ENCODE measurements at regions of chr16 and their contacts with region 1.

Region 1: GRCh38 chr16:48687421-48688038 is 77.5 kb upstream of the N4BP1 start:
- DNase-seq: no peak

Region 2: GRCh38 chr16:49350265-49351095 is 663.0 kb after region 1 on chr16:
- intact Hi-C with region 1: loop called (anchors 2 kb)
- DNase-seq: peak; percentile 76